A673 (cell line): ENCODE measurements at regions of chr18 and their contacts with region 1.

Region 1: DNA sequence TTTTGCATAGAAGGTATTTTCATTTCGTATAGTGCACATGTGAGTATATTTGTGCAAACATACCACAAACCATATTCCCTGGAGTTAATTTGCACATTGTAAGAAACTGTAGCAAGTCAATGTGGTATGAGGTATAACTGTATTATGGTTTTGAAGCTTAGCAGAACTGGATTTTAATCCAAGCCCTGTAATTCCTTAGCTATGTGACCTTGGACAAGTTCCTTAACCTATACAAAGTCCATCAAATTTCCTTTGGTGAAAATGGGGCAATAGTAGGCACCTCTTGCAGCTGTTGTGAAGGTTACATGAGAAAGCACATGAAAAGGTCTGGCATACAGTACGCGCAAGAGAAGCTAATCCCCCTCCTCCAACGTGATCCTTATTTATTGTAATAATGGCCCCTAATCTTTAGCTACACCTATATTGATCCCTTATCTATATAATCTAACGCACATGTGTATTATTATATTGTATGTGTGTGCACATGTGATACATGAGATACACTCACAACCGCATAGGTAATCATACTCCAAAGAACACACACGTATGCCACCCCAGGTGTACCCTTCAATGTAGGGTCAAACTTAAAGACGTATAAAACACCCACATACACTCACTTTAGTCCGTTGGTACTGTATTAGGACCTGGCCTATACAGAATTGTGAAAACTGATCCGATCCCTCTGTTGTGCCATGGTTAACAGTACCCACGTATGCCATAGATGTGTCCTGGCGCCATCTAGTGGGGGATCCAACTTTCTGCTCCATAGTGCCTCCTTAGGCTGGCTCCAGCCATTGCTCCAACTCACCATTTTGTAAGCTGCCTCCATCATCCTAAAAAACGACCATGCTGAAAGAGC is 402.9 kb upstream of the SLC14A2 start:
- DNase-seq: peak; percentile 87
- H3K4me3 ChIP-seq: no peak overlapping the region
- H3K27ac ChIP-seq: no peak overlapping the region
- H3K4me1 ChIP-seq: no peaks in the 10 kb centered on the region
- H3K27me3 ChIP-seq: no peaks in the 10 kb centered on the region
- CTCF ChIP-seq: peak; percentile 99

Region 2: GRCh38 chr18:44331656-44332570 is 880.5 kb before region 1 on chr18:
- CTCF ChIA-PET with region 1: no interaction called
- POLR2A ChIA-PET with region 1: no interaction called
- intact Hi-C with region 1: loop called (anchors 10 kb)
- DNase-seq: no peak
- H3K4me3 ChIP-seq: no peak overlapping the region
- H3K27ac ChIP-seq: no peak overlapping the region
- H3K4me1 ChIP-seq: no peaks in the 10 kb centered on the region
- H3K27me3 ChIP-seq: no peaks in the 10 kb centered on the region
- CTCF ChIP-seq: no peak

Region 3: GRCh38 chr18:44742704-44743311 is 469.6 kb before region 1 on chr18:
- CTCF ChIA-PET with region 1: no interaction called
- POLR2A ChIA-PET with region 1: no interaction called
- intact Hi-C with region 1: no loop called
- DNase-seq: no peak
- H3K4me3 ChIP-seq: no peak overlapping the region
- H3K27ac ChIP-seq: no peak overlapping the region
- H3K4me1 ChIP-seq: no peaks in the 10 kb centered on the region
- H3K27me3 ChIP-seq: no peaks in the 10 kb centered on the region
- CTCF ChIP-seq: no peak

Region 4: DNA sequence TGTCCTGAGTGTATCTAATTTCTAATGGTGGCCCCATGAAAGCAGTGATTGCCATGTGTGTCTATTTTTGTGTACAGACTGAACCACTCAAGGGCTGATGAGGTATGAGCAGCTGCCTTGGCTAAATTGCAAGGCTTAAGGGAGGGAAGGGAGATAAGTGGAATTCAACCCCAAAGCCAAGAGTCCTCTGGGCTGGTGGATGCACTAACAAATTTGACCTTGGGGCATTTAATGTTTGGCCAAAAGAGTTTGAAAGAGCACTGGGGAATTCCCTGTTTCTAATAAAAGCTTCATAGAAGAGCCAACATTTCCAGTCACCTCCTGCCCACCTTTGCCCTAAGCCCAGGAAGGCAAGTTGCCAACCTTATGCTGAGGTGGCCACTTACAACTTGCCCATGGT is 359.6 kb before region 1 on chr18:
- CTCF ChIA-PET with region 1: no interaction called
- POLR2A ChIA-PET with region 1: no interaction called
- intact Hi-C with region 1: no loop called
- DNase-seq: no peak
- H3K4me3 ChIP-seq: no peak overlapping the region
- H3K27ac ChIP-seq: no peak overlapping the region
- H3K4me1 ChIP-seq: peaks cover 15% of the 10 kb centered on the region
- H3K27me3 ChIP-seq: no peaks in the 10 kb centered on the region
- CTCF ChIP-seq: no peak

Region 5: GRCh38 chr18:44909191-44909719 is 303.2 kb before region 1 on chr18:
- CTCF ChIA-PET with region 1: no interaction called
- POLR2A ChIA-PET with region 1: no interaction called
- intact Hi-C with region 1: loop called (anchors 10 kb)
- DNase-seq: no peak
- H3K4me3 ChIP-seq: no peak overlapping the region
- H3K27ac ChIP-seq: no peak overlapping the region
- H3K4me1 ChIP-seq: no peaks in the 10 kb centered on the region
- H3K27me3 ChIP-seq: no peaks in the 10 kb centered on the region
- CTCF ChIP-seq: no peak